ENCODE measurements at regions of chr17 and their contacts with region 1.

Region 1: DNA sequence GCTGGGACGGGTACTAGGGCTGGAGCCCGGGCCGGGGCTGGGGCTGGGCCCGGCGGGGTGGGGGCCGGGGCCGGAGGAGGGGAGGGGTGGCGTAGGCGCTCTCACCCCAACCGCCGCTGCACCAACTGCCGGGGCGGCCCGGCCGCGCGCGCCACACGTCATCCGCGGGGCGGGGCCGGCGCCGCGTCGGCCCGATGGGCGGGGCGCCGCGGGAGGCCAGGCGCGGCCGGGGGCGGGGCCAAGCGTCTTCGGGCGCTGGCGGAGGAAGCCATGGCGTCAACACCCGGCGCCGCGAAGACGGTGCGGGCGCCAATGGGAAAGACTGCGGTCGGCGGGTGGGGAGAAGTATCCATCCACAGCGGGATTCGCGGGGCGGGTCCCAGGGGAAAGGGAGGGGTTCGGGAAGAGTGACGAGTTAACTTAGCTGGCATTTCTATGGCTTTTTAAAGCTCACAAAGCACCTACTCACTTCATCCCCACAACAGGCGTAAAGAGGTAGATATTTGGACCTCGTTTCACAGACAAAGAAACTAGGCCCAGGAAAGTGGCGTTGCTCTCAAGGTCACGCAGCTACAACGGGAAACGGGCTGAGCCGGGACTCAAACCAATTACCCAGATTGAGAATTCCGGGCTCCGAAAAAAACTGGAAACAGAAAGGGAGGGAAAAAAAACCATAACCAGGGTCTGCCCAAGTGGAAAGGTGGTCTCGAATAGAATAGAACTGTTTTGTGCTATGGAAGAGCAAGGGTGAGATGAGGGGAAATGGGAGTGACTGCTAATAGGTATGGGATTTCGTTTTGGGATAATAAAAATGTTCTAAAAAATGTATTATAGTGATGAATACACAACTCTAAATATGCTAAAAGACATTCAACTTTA is at the start of gene SPAG9:
- DNase-seq: peak; percentile 85 to 98
- H3K4me3 ChIP-seq: peak within 1 kb of the TSS; percentile 99 to 100
- H3K27ac ChIP-seq: peak within 1 kb of the TSS; percentile 99
- H3K4me1 ChIP-seq: peaks cover 3 to 20% of the 10 kb centered on the region in 2 donors
- H3K27me3 ChIP-seq: no peaks in the 10 kb centered on the region
- CTCF ChIP-seq: no peak
- total RNA-seq, gene SPAG9: 41.3 TPM

Region 2: GRCh38 chr17:51056813-51057510 is 64.0 kb before region 1 on chr17:
- intact Hi-C with region 1: loop called (anchors 10 kb)
- DNase-seq: no peak
- H3K4me3 ChIP-seq: no peak overlapping the region
- H3K27ac ChIP-seq: peak overlapping the region; percentile 20 to 45
- H3K4me1 ChIP-seq: peaks cover 0 to 9% of the 10 kb centered on the region in 2 donors
- H3K27me3 ChIP-seq: no peaks in the 10 kb centered on the region
- CTCF ChIP-seq: peak; percentile 24 to 54 (median 27)

Region 3: GRCh38 chr17:51166197-51166986 is 45.4 kb after region 1 on chr17 and contains the start of gene NME2:
- intact Hi-C with region 1: loop called (anchors 5 kb)
- DNase-seq: peak; percentile 66 to 94
- H3K4me3 ChIP-seq: peak within 1 kb of the TSS; percentile 80 to 99
- H3K27ac ChIP-seq: peak within 1 kb of the TSS; percentile 97 to 98
- H3K4me1 ChIP-seq: peaks cover 0 to 10% of the 10 kb centered on the region in 2 donors
- H3K27me3 ChIP-seq: no peaks in the 10 kb centered on the region
- CTCF ChIP-seq: no peak
- total RNA-seq, gene NME2: 638 TPM

Region 4: DNA sequence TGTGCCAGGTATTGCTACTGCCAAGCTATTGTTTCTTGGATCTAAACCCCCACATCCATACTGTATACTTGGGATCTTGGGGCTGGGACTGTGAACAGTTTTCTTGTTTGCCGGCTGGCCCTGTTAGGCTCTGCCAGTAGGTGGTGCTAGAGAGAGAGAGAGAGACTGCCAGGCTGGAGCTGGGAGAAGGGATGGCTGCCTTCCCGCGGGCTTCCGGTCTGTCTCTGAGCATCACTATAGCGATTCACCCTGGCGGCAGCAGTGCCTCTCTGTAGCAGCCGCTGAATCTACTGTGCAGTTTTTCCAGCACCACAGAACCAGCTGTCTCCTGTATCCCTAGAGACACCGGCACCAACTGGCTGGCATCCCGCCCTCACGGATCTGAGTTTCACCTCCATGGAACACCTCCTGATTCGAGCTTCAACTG is 340.6 kb after region 1 on chr17:
- intact Hi-C with region 1: no loop called
- DNase-seq: no peak
- H3K4me3 ChIP-seq: no peak overlapping the region
- H3K27ac ChIP-seq: no peak overlapping the region
- H3K4me1 ChIP-seq: no peaks in the 10 kb centered on the region
- H3K27me3 ChIP-seq: no peaks in the 10 kb centered on the region
- CTCF ChIP-seq: peak in 2 of 3 experiments; percentile 27 to 41

Measured in ascending aorta (tissue), 2 donors.